ENCODE measurements at regions of chr16 and their contacts with region 1.

Region 1: GRCh38 chr16:30698139-30698815 is 694 bp upstream of the SRCAP start:
- DNase-seq: peak; percentile 93 to 98
- ATAC-seq: peak; percentile 88 to 92
- H3K4me3 ChIP-seq: peak overlapping the region; percentile 89 to 100 (median 98)
- H3K27ac ChIP-seq: peak overlapping the region; percentile 98 to 100 (median 100)
- H3K4me1 ChIP-seq: peaks cover 26 to 28% of the 10 kb centered on the region in 2 donors
- H3K27me3 ChIP-seq: no peaks in the 10 kb centered on the region
- CTCF ChIP-seq: no peak
- POLR2A ChIP-seq: peak; percentile 84 to 88

Region 2: GRCh38 chr16:30122604-30123160 is 575.6 kb before region 1 on chr16:
- in situ Hi-C with region 1: no loop called
- intact Hi-C with region 1: loop called (anchors 5 kb)
- DNase-seq: no peak
- ATAC-seq: no peak
- H3K4me3 ChIP-seq: peak overlapping the region; percentile 79 to 92 (median 86)
- H3K27ac ChIP-seq: peak overlapping the region; percentile 85 to 96 (median 87)
- H3K4me1 ChIP-seq: peaks cover 14 to 18% of the 10 kb centered on the region in 2 donors
- H3K27me3 ChIP-seq: no peaks in the 10 kb centered on the region
- CTCF ChIP-seq: no peak
- POLR2A ChIP-seq: no peak

Region 3: GRCh38 chr16:30650369-30651123 is 47.7 kb before region 1 on chr16 and contains the start of gene PRR14:
- in situ Hi-C with region 1: loop called in 1 of 4 experiments (anchors 10 kb)
- intact Hi-C with region 1: loop called (anchors 1 kb)
- DNase-seq: peak; percentile 100
- ATAC-seq: peak; percentile 90 to 91
- H3K4me3 ChIP-seq: peak within 1 kb of the TSS; percentile 83 to 96 (median 93)
- H3K27ac ChIP-seq: peak within 1 kb of the TSS; percentile 94 to 99 (median 98)
- H3K4me1 ChIP-seq: peaks cover 6 to 18% of the 10 kb centered on the region in 2 donors
- H3K27me3 ChIP-seq: no peaks in the 10 kb centered on the region
- CTCF ChIP-seq: peak in 4 of 5 experiments; percentile 38 to 69 (median 48)
- POLR2A ChIP-seq: peak in 1 of 2 donors; percentile 74
- total RNA-seq, gene PRR14: 8.8 to 28.4 (median 17.8) TPM

Region 4: GRCh38 chr16:30657866-30658730 is 40.2 kb before region 1 on chr16 and contains the start of gene FBRS:
- in situ Hi-C with region 1: no loop called
- intact Hi-C with region 1: loop called (anchors 1 kb)
- DNase-seq: peak; percentile 100
- ATAC-seq: peak; percentile 83 to 88
- H3K4me3 ChIP-seq: peak within 1 kb of the TSS; percentile 61 to 89 (median 79)
- H3K27ac ChIP-seq: peak within 1 kb of the TSS; percentile 93 to 99 (median 96)
- H3K4me1 ChIP-seq: peaks cover 32 to 33% of the 10 kb centered on the region in 2 donors
- H3K27me3 ChIP-seq: no peaks in the 10 kb centered on the region
- CTCF ChIP-seq: peak; percentile 64 to 90 (median 83)
- POLR2A ChIP-seq: peak; percentile 83 to 88
- total RNA-seq, gene FBRS: 22.0 to 34.8 (median 28.0) TPM

Region 5: GRCh38 chr16:30747799-30748634 is 49.7 kb after region 1 on chr16 and contains the start of gene PHKG2:
- in situ Hi-C with region 1: no loop called
- intact Hi-C with region 1: loop called (anchors 1 kb)
- DNase-seq: peak; percentile 99 to 100
- ATAC-seq: peak; percentile 95 to 96
- H3K4me3 ChIP-seq: peak within 1 kb of the TSS; percentile 76 to 91 (median 88)
- H3K27ac ChIP-seq: peak within 1 kb of the TSS; percentile 73 to 91 (median 79)
- H3K4me1 ChIP-seq: peaks cover 7 to 8% of the 10 kb centered on the region in 2 donors
- H3K27me3 ChIP-seq: no peaks in the 10 kb centered on the region
- CTCF ChIP-seq: no peak
- POLR2A ChIP-seq: peak; percentile 48 to 53
- total RNA-seq, gene PHKG2: 8.8 to 30.0 (median 21.6) TPM

Region 6: GRCh38 chr16:30813821-30814189 is 115.5 kb after region 1 on chr16:
- in situ Hi-C with region 1: no loop called
- intact Hi-C with region 1: loop called (anchors 1 kb)
- DNase-seq: no peak
- ATAC-seq: peak; percentile 29 to 73
- H3K4me3 ChIP-seq: peak overlapping the region; percentile 57 to 67 (median 62)
- H3K27ac ChIP-seq: peak overlapping the region; percentile 70 to 87 (median 78)
- H3K4me1 ChIP-seq: no peaks in the 10 kb centered on the region
- H3K27me3 ChIP-seq: no peaks in the 10 kb centered on the region
- CTCF ChIP-seq: no peak
- POLR2A ChIP-seq: no peak

Region 7: DNA sequence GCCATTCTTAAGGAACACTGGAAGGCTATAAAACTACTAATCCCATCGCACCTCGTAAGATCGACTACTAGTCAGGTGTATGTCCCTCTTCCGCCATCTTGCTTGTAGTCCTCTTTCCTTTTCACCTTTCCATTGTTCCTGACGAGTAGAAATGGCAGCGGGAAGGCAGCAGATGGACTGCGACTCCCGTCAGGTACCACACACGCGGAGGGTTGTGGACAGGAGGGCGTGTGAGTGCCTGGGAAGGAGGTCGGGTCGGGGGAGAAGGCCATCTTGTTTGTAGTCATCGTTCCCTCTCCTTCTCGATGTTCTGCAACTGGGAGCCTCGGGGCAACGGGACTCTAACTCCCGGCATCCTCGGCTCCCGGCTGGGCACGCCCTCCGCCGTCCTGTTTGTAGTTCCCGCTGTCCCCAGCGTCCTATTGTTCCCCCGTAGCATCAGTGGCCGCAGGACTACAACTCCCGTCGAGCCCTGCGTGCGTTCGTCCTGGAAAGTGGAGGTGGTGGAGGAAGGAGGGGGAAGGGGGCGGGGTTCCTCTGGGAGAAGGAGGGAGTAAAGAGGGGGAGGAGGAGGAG is 224.8 kb after region 1 on chr16:
- in situ Hi-C with region 1: no loop called
- intact Hi-C with region 1: loop called (anchors 1 kb)
- DNase-seq: peak; percentile 100
- ATAC-seq: peak; percentile 79
- H3K4me3 ChIP-seq: peak overlapping the region; percentile 74 to 93 (median 88)
- H3K27ac ChIP-seq: peak overlapping the region; percentile 92 to 97 (median 96)
- H3K4me1 ChIP-seq: peaks cover 11 to 16% of the 10 kb centered on the region in 2 donors
- H3K27me3 ChIP-seq: no peaks in the 10 kb centered on the region
- CTCF ChIP-seq: no peak
- POLR2A ChIP-seq: peak in 1 of 2 donors; percentile 64

Measured in gastrocnemius medialis (tissue), 4 donors.